Activated CD4-positive, alpha-beta T cell treated with anti-CD3 and anti-CD28 coated beads for 36 hours (primary cell): ENCODE measurements at regions of chr4 and their contacts with region 1.

Region 1: DNA sequence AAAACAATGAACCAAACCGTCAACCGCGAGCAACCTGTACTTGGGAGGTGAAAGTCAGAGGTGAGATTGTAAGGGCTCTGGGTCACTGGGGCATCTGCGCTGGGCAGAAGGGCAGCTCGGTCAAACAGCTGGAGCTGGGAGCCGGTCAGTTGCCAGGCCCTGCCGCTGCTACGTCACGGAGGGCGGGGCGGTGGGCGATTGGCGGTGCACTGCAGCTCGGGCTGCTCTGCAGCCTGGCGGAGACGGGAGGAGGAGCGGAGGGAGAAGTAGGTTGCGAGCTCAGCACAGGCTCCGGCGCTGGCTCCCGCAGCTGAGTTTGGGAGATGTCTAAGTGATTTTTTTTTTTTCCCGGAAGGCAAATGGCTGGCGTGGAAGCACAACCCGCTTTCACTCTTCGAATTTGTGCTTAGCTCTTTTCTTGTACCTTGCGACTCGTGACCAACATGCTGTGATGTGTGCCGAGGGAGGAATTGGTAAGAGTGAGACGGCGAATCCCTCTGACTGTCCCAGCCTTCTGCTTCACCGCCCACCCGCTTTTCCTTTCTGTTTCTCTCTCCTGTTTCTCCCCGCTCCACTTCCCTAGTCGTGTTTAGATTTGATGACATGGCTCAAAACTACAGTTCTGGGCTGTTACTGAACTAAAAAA is at the start of gene ATP10D:
- DNase-seq: peak; percentile 88
- ATAC-seq: peak; percentile 97
- H3K4me3 Mint-ChIP-seq: peak within 1 kb of the TSS; percentile 83
- H3K27ac Mint-ChIP-seq: peak within 1 kb of the TSS; percentile 82
- H3K4me1 Mint-ChIP-seq: peaks cover 26% of the 10 kb centered on the region
- H3K27me3 Mint-ChIP-seq: no peaks in the 10 kb centered on the region
- total RNA-seq, gene ATP10D: 2.5 to 2.8 TPM

Region 2: GRCh38 chr4:47413521-47413920 is 71.6 kb before region 1 on chr4:
- CTCF ChIA-PET with region 1: no interaction called
- POLR2A ChIA-PET with region 1: no interaction called
- intact Hi-C with region 1: no loop called
- DNase-seq: no peak
- ATAC-seq: no peak
- H3K4me3 Mint-ChIP-seq: no peak overlapping the region
- H3K27ac Mint-ChIP-seq: no peak overlapping the region
- H3K4me1 Mint-ChIP-seq: no peaks in the 10 kb centered on the region
- H3K27me3 Mint-ChIP-seq: peaks cover 4% of the 10 kb centered on the region

Region 3: DNA sequence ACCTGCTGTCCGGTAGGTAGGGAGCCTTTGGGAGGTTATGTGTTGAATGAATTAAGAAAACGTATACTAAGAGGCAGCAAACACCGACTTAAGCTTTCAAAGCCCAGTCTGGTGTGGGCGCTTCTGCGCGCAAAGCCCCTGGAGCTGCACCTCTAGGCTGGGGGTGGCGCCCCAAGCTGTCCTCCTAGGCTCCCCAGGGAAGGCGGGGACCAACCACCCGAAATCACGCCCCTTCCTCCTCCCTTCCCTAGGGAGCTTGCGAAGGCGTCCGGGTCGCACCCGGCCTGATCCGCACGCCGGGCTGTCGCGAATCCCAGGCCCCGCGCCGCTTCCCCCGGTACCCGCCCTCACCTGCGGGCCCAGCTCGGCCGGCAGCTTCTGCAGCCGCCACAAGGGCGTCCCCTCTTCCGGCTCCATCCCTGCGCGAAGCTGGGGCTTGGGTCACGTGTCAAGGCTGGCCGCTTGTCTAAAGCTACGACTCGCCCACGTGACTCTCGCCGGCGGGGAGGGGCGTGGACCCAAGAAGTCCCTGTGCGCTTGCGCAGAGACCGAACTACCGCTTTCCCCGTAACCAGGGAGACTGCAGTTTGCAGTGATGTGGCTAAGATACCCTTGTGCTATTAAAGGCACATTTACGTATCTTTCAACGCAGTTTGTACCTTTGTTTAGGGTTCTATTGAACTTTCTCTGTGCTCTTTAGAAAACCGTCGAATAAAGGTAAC is 21.8 kb before region 1 on chr4 and contains the start of gene COMMD8:
- CTCF ChIA-PET with region 1: interaction called, 18 read pairs
- POLR2A ChIA-PET with region 1: no interaction called
- intact Hi-C with region 1: loop called (anchors 1 kb)
- DNase-seq: peak; percentile 98
- ATAC-seq: peak; percentile 97
- H3K4me3 Mint-ChIP-seq: peak within 1 kb of the TSS; percentile 82
- H3K27ac Mint-ChIP-seq: peak within 1 kb of the TSS; percentile 52
- H3K4me1 Mint-ChIP-seq: peaks cover 31% of the 10 kb centered on the region
- H3K27me3 Mint-ChIP-seq: no peaks in the 10 kb centered on the region
- total RNA-seq, gene COMMD8: 15.0 to 26.5 TPM

Region 4: GRCh38 chr4:47473141-47473740 is 11.9 kb before region 1 on chr4:
- CTCF ChIA-PET with region 1: interaction called, 12 read pairs
- POLR2A ChIA-PET with region 1: interaction called, 4 read pairs
- intact Hi-C with region 1: no loop called
- DNase-seq: no peak
- ATAC-seq: no peak
- H3K4me3 Mint-ChIP-seq: no peak overlapping the region
- H3K27ac Mint-ChIP-seq: no peak overlapping the region
- H3K4me1 Mint-ChIP-seq: no peaks in the 10 kb centered on the region
- H3K27me3 Mint-ChIP-seq: no peaks in the 10 kb centered on the region

Region 5: GRCh38 chr4:47531954-47532321 is 46.8 kb after region 1 on chr4:
- CTCF ChIA-PET with region 1: interaction called, 4 read pairs
- POLR2A ChIA-PET with region 1: no interaction called
- intact Hi-C with region 1: loop called in 1 of 2 experiments (anchors 2 kb)
- DNase-seq: no peak
- ATAC-seq: no peak
- H3K4me3 Mint-ChIP-seq: no peak overlapping the region
- H3K27ac Mint-ChIP-seq: peak overlapping the region; percentile 28
- H3K4me1 Mint-ChIP-seq: peaks cover 35% of the 10 kb centered on the region
- H3K27me3 Mint-ChIP-seq: no peaks in the 10 kb centered on the region